ENCODE measurements at regions of chr4 and their contacts with region 1.

Region 1: GRCh38 chr4:75989846-75990528 is 758 bp downstream of the SDAD1 start:
- DNase-seq: no peak
- H3K4me3 Mint-ChIP-seq: peak overlapping the region; percentile 85
- H3K27ac Mint-ChIP-seq: peak overlapping the region; percentile 72
- H3K4me1 Mint-ChIP-seq: peaks cover 27% of the 10 kb centered on the region
- H3K27me3 Mint-ChIP-seq: no peaks in the 10 kb centered on the region

Region 2: GRCh38 chr4:76067652-76068286 is 77.8 kb after region 1 on chr4:
- CTCF ChIA-PET with region 1: interaction called, 117 read pairs
- intact Hi-C with region 1: loop called (anchors 1 kb)
- DNase-seq: peak; percentile 90
- H3K4me3 Mint-ChIP-seq: no peak overlapping the region
- H3K27ac Mint-ChIP-seq: no peak overlapping the region
- H3K4me1 Mint-ChIP-seq: no peaks in the 10 kb centered on the region
- H3K27me3 Mint-ChIP-seq: peaks cover 4% of the 10 kb centered on the region